Psoas muscle (tissue), 8 donors: ENCODE measurements at regions of chr4 and their contacts with region 1.

Region 1: GRCh38 chr4:51895813-51896408 is 53.0 kb downstream of the DCUN1D4 start:
- DNase-seq: peak; percentile 38 to 61
- ATAC-seq: peak; percentile 90 to 97 (median 96)
- H3K4me3 ChIP-seq: no peak overlapping the region
- H3K27ac ChIP-seq: peak overlapping the region; percentile 57
- H3K4me1 ChIP-seq: peaks cover 12% of the 10 kb centered on the region
- H3K27me3 ChIP-seq: no peaks in the 10 kb centered on the region
- CTCF ChIP-seq: peak; percentile 78

Region 2: GRCh38 chr4:51842554-51843308 is 53.2 kb before region 1 on chr4 and contains the start of gene DCUN1D4:
- intact Hi-C with region 1: loop called (anchors 5 to 10 kb)
- DNase-seq: peak; percentile 100
- ATAC-seq: peak; percentile 90 to 96 (median 92)
- H3K4me3 ChIP-seq: peak within 1 kb of the TSS; percentile 96
- H3K27ac ChIP-seq: peak within 1 kb of the TSS; percentile 95
- H3K4me1 ChIP-seq: peaks cover 18% of the 10 kb centered on the region
- H3K27me3 ChIP-seq: no peaks in the 10 kb centered on the region
- CTCF ChIP-seq: peak; percentile 40
- total RNA-seq, gene DCUN1D4: 24.0 to 43.1 (median 31.1) TPM

Region 3: DNA sequence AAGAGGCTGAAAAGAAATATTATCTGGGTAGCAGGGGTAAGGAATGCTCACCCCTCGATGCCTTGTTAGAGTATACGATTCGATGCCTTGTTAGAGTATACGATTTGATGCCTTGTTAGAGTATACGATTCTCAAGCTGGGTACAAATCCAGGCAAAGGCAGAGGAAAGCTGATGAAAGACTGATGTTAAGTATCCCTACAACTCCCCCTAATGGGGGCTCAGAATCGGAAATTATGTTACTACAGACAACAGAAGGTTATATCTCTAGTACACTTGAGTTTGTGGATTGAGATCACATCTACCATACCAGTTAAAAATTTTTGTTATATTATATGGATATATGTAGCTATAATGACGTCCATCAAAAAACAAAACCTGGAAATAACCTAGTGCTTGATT is 119.5 kb after region 1 on chr4:
- intact Hi-C with region 1: loop called in 1 of 2 experiments (anchors 10 kb)
- DNase-seq: no peak
- ATAC-seq: no peak
- H3K4me3 ChIP-seq: no peak overlapping the region
- H3K27ac ChIP-seq: no peak overlapping the region
- H3K4me1 ChIP-seq: no peaks in the 10 kb centered on the region
- H3K27me3 ChIP-seq: no peaks in the 10 kb centered on the region
- CTCF ChIP-seq: no peak

Region 4: GRCh38 chr4:52028969-52029368 is 133.1 kb after region 1 on chr4:
- intact Hi-C with region 1: loop called in 1 of 2 experiments (anchors 5 kb)
- DNase-seq: no peak
- ATAC-seq: no peak
- H3K4me3 ChIP-seq: no peak overlapping the region
- H3K27ac ChIP-seq: no peak overlapping the region
- H3K4me1 ChIP-seq: peaks cover 10% of the 10 kb centered on the region
- H3K27me3 ChIP-seq: no peaks in the 10 kb centered on the region
- CTCF ChIP-seq: no peak

Region 5: DNA sequence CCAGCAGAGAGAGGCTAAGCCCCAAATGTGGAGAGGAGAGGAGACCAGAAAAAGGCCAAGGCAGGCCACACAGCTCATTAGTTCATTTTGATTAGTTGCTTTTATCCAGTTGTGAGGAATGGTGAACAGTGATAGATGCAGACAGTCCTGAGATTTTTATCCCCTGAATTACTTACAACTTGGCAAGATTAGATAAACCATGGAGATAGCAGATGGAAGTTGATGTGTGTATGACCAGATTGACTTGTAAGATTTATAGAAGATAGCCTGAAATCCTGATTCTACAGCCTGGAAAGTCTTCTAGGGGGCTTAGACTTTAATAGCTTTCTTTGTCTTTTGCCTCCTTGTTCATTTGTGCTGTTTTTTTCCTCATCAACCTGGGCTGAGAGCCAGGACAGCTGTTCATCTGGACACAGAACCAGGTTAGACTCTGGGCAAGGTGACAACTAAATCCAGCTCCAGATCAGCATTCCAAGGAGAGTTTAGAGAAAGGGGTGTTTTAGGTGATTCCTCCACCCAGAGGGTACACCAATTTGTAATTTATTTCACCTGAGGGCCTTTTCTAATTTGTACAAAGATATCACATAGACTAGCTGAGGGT is 370.7 kb after region 1 on chr4:
- intact Hi-C with region 1: no loop called
- DNase-seq: peak in 1 of 2 donors; percentile 54
- ATAC-seq: no peak
- H3K4me3 ChIP-seq: no peak overlapping the region
- H3K27ac ChIP-seq: no peak overlapping the region
- H3K4me1 ChIP-seq: no peaks in the 10 kb centered on the region
- H3K27me3 ChIP-seq: no peaks in the 10 kb centered on the region
- CTCF ChIP-seq: no peak